ENCODE measurements at regions of chr6 and their contacts with region 1.

Region 1: DNA sequence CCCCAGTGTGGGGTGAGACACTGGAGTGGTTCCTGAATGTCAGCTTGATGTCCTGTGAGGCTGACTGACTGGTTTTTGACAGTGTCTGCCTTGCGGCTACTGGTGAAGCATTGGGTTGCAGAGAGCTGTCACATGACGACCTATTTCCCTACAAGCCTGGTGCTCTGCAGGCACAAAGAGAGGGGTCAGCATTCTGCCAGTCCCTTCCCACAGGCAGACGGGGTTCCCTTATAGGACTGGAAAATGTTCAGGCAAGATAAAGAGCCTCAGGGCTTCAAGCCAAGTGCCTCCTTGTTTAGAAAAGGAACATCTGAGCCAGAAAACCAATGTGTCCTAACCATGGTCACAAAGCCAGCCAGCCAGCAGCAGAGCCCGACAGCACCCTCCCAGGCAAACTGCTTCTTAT is 11.0 kb downstream of the LY86 start:
- DNase-seq: no peak

Region 2: GRCh38 chr6:6556738-6557505 is 42.5 kb before region 1 on chr6:
- intact Hi-C with region 1: loop called (anchors 5 kb)
- DNase-seq: no peak

Region 3: DNA sequence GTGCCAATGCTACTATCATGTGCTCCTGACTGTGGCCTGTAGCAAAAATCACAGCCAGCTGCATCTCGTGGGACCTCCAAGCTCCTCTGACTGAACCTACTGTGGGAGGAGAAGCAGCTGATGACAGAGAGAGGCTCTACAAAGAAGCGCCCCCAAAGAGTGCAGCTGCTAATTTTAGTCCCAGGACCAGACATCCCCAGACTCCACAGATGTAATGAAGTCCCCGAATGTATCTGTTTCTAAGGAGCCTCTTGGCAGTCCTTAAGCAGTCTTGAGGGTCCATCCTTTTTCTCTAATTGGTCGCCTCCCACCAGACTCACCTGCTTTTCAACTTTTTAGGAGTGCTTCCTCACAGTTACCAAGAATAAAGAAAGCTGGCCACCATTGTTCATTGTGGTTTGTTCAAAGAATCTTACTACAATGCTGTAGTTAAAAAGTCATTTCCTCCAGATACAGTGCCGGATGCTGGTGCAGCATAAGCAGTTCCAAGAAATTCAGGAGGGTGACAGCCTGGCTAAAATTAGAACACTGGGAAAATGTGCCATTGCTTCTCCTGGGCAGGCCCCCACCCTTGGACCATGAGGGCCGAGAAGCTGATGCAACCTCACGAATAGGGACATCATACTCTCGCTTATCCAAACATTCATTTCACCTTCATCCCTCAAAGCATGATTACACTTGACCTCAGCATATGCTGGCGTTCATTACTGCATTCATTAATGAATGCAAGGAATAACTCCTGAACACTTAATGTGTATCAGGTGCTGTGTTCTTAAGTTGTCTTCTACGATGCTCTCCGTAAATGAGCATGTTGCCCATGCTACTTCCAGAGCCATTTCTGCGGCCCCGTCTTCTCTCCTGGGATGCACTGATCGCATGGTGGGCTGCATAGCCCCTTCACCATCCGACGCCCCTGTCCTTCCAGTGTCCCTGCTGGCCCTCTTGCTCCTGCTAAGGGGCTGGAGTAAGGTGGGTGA is 55.4 kb after region 1 on chr6:
- intact Hi-C with region 1: loop called (anchors 2 kb)
- DNase-seq: no peak